Activated T-helper 1 cell treated with anti-CD3 and anti-CD28 coated beads, Interleukin-12 subunit alpha, Interleukin-12 subunit beta, Interleukin-2, Interleukin-4 antibody, amounts not matched to agents 30 ng/mL and 10 ng/mL and 1 ng/mL, durations not matched to agents 14 hours and 24 hours and 36 hours (primary cell): ENCODE measurements at regions of chr17 and their contacts with region 1.

Region 1: DNA sequence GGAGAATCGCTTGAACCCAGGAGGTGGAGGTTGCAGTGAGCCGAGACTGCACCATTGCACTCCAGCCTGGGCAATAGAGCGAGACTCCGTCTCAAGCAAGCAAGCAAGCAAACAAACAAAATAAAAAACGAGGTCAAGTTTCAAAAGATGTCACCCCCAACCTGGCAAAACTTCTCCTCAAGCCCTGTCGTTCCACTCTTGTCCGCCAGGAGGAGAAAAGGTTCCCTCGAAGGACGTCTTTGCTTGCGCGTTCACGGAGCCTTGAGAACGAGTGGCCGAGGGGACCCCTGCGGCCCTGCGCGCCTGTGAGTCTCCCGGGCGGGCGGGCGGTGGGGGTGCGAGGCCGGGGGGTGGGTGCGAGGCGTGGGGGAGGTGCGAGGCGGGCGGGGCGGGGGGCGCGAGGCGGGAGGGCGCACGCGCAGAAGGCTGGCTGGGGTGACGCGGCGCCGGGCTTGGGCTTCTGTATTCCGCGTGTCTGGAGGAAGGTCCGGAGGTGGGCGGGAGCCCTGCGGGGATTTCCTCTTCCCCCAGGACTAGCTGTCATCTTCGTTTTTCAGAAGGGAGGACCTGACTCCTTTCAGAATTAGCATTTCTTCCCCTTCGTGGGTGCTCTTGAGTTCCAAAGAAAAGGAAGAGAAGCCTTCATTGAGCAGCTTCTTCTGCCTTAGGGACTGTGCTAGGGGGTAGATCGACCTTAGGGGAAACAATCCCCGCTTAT is 3.7 kb downstream of the SLC52A1 start:
- DNase-seq: peak; percentile 73
- H3K4me3 Mint-ChIP-seq: peak overlapping the region; percentile 86
- H3K27ac Mint-ChIP-seq: peak overlapping the region; percentile 95
- H3K4me1 Mint-ChIP-seq: peaks cover 19% of the 10 kb centered on the region
- H3K27me3 Mint-ChIP-seq: peaks cover 7% of the 10 kb centered on the region

Region 2: GRCh38 chr17:4215882-4216570 is 815.5 kb before region 1 on chr17:
- intact Hi-C with region 1: no loop called
- DNase-seq: no peak
- H3K4me3 Mint-ChIP-seq: no peak overlapping the region
- H3K27ac Mint-ChIP-seq: peak overlapping the region; percentile 15
- H3K4me1 Mint-ChIP-seq: peaks cover 21% of the 10 kb centered on the region
- H3K27me3 Mint-ChIP-seq: no peaks in the 10 kb centered on the region

Region 3: GRCh38 chr17:4771519-4772234 is 259.8 kb before region 1 on chr17 and contains the start of gene TM4SF5:
- intact Hi-C with region 1: no loop called
- DNase-seq: no peak
- H3K4me3 Mint-ChIP-seq: no peak within 1 kb of the TSS
- H3K27ac Mint-ChIP-seq: no peak within 1 kb of the TSS
- H3K4me1 Mint-ChIP-seq: peaks cover 13% of the 10 kb centered on the region
- H3K27me3 Mint-ChIP-seq: peaks cover 25% of the 10 kb centered on the region
- total RNA-seq, gene TM4SF5: not detected in 2 replicates

Region 4: DNA sequence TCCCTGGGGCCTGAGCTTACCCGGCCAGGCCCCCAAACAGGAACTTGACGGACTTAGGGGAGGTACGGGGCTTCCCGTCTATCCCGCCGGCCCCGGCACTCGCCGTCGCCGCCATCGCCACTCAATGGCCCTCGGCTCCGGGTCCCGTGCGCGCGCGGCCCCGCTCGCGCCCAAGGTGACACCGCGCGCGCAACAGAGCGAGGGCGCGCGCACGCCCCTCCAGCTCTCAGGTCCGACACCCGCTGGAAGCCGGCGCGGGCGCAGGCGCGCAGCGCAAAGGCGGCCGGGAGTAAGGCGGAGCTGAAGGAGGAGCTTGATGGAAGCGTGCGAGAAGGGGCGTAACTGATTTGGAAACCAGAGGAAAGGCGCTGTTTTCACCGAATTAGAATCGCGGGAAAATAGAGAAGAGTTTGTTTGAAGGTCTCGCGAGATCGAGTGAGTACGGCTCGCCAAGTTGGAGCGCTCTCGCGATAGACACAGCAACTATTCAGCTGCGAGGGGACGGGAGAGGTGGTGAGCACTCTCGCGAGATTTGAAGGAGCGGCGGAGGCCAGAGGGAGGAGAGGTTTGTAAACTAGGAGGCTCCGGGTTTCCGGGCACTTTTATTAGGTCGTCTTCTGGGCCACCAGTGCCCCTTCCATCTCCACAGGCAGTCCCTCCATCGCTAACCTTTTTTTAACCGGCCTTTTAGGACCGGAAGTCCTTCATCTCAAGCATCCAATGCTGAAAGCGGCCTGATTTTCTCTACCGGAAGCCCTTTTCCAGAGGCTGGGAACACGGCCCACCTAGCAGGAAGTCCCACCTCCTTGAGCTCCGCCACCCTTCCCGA is 91.5 kb before region 1 on chr17 and contains the starts of genes RNF167 and SLC25A11:
- intact Hi-C with region 1: loop called (anchors 1 kb)
- DNase-seq: peak; percentile 98
- H3K4me3 Mint-ChIP-seq: peak within 1 kb of the TSS; percentile 100
- H3K27ac Mint-ChIP-seq: peak within 1 kb of the TSS; percentile 94
- H3K4me1 Mint-ChIP-seq: peaks cover 56% of the 10 kb centered on the region
- H3K27me3 Mint-ChIP-seq: no peaks in the 10 kb centered on the region
- total RNA-seq, gene RNF167: 138 and 140 TPM in 2 replicates
- total RNA-seq, gene SLC25A11: 111 and 116 TPM in 2 replicates

Region 5: GRCh38 chr17:4997302-4998026 is 34.1 kb before region 1 on chr17 and contains the starts of genes INCA1 and KIF1C:
- intact Hi-C with region 1: loop called (anchors 1 kb)
- DNase-seq: peak; percentile 89
- H3K4me3 Mint-ChIP-seq: peak within 1 kb of the TSS; percentile 90
- H3K27ac Mint-ChIP-seq: peak within 1 kb of the TSS; percentile 90
- H3K4me1 Mint-ChIP-seq: peaks cover 19% of the 10 kb centered on the region
- H3K27me3 Mint-ChIP-seq: peaks cover 8% of the 10 kb centered on the region
- total RNA-seq, gene INCA1: 0.34 and 0.37 TPM in 2 replicates
- total RNA-seq, gene KIF1C: 68.4 and 71.3 TPM in 2 replicates

Region 6: GRCh38 chr17:5049314-5049895 is 17.9 kb after region 1 on chr17:
- intact Hi-C with region 1: loop called (anchors 2 kb)
- DNase-seq: peak; percentile 41
- H3K4me3 Mint-ChIP-seq: peak overlapping the region; percentile 51
- H3K27ac Mint-ChIP-seq: peak overlapping the region; percentile 83
- H3K4me1 Mint-ChIP-seq: peaks cover 31% of the 10 kb centered on the region
- H3K27me3 Mint-ChIP-seq: no peaks in the 10 kb centered on the region

Region 7: GRCh38 chr17:5078106-5079028 is 46.8 kb after region 1 on chr17 and contains the start of gene ZFP3:
- intact Hi-C with region 1: loop called (anchors 5 kb)
- DNase-seq: peak; percentile 72
- H3K4me3 Mint-ChIP-seq: peak within 1 kb of the TSS; percentile 81
- H3K27ac Mint-ChIP-seq: peak within 1 kb of the TSS; percentile 86
- H3K4me1 Mint-ChIP-seq: peaks cover 17% of the 10 kb centered on the region
- H3K27me3 Mint-ChIP-seq: peaks cover 2% of the 10 kb centered on the region
- total RNA-seq, gene ZFP3: 1.9 and 2.0 TPM in 2 replicates